ENCODE measurements at regions of chr1 and their contacts with region 1.

Region 1: GRCh38 chr1:32773018-32773763 is 44.0 kb downstream of the YARS1 start:
- DNase-seq: peak; percentile 76 to 82
- ATAC-seq: peak; percentile 59 to 83
- H3K4me3 ChIP-seq: no peak overlapping the region
- H3K27ac ChIP-seq: peak overlapping the region; percentile 28 to 99; a peak in 5 of 6 replicates
- H3K4me1 ChIP-seq: peaks cover 80% of the 10 kb centered on the region
- CTCF ChIP-seq: peak; percentile 88
- EP300 ChIP-seq: no peak
- POLR2A ChIP-seq: no peak
- RAD21 ChIP-seq: peak; percentile 87 to 88

Region 2: DNA sequence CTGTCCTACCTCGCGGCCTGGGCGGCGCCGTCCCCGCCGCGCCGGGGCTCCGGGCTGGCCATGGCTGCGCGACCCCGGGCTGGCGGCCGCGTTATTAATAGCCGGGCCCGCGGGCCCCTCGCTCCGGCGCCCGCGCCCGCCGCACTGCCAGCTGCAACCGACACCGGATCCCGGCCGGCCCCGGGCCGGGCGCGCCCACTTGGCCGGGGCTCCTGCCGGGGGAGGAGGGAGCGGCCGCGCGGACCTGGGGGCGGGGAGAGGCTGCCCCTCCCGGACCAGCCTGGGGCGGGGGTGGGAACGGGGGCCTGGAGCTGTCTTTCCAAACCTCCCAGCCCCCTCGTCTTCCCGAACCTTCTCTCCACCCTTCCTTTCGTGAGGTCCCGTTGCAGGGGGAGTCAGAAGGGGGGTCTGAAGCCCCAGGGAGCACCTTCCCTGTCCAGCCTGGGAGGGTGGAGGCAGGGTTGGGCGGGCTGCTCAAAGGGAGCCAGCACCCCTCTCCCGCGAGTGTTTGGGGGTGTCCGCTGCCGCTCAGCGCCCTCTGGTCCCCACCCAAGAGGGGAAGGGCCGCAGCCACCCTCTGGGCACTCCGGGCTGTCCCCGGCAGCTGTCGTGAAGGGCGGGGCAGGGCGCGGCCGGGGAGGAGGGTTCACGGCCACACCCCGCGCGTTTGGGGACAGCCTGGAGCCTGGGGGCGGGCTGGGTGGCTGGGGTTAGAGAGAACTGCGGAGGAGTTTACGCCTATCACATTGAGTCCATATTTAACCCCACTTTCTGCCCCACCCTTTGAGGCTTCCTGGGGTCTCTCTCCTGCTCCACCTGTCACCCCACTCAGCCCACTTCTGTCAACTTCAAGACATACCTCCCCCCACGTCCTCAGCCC is 70.4 kb before region 1 on chr1 and contains the start of gene SYNC:
- CTCF ChIA-PET with region 1: interaction called, 383 read pairs
- POLR2A ChIA-PET with region 1: interaction called, 3 read pairs
- DNase-seq: peak; percentile 56 to 69
- ATAC-seq: peak; percentile 62 to 74
- H3K4me3 ChIP-seq: peak within 1 kb of the TSS; percentile 64
- H3K27ac ChIP-seq: peak within 1 kb of the TSS; percentile 92 to 100
- H3K4me1 ChIP-seq: peaks cover 43% of the 10 kb centered on the region
- CTCF ChIP-seq: no peak
- EP300 ChIP-seq: no peak
- POLR2A ChIP-seq: peak; percentile 7; the same call in 1 of the 2 replicates
- RAD21 ChIP-seq: no peak
- polyA plus RNA-seq, gene SYNC: 5.5 and 7.7 TPM in 2 replicates

Region 3: DNA sequence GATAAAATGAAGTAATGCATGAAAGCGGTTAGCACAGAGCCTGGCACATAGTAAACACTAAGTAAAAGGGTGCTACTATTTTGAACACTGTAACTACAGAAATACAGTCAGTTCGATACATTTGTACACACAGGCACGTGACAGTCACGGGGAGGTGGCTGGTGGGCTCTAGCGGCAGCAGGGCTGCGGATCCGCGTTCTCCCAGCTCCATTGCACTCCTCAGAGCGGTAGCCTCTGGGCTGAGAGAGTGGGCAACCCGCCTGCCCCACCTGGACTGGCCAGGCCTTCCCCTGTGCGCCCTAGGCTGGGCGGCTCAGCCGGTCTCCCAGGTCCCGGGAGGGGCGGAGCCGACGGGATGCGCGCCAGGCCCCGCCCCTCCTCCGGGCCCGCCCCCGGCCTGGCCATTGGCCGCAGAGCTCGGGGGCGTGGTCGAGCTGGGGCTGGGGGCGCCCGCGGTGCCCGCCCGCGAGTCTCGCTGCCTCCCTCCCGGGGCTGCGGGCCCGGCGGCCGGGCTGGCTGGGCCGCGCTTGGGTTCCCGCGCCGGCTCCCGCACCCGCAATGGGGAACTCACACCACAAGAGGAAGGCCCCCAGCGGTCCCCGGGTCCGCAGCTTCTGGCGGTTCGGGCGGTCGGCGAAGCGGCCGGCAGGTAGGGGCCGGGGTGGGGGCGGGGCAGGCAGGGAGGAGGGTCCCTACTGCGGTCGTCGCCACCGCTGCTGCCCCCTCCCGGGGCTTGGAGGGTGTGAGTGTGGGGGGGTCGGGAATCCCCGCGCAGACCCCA is 19.5 kb before region 1 on chr1:
- CTCF ChIA-PET with region 1: interaction called, 22 read pairs
- POLR2A ChIA-PET with region 1: no interaction called
- DNase-seq: no peak
- ATAC-seq: peak in 1 of 2 experiments; percentile 49; a peak in 3 of 6 replicates
- H3K4me3 ChIP-seq: no peak overlapping the region
- H3K27ac ChIP-seq: peak overlapping the region in 1 of 2 experiments; percentile 36; a peak in 1 of 6 replicates
- H3K4me1 ChIP-seq: peaks cover 44% of the 10 kb centered on the region
- CTCF ChIP-seq: no peak
- EP300 ChIP-seq: no peak
- POLR2A ChIP-seq: no peak
- RAD21 ChIP-seq: no peak

Region 4: DNA sequence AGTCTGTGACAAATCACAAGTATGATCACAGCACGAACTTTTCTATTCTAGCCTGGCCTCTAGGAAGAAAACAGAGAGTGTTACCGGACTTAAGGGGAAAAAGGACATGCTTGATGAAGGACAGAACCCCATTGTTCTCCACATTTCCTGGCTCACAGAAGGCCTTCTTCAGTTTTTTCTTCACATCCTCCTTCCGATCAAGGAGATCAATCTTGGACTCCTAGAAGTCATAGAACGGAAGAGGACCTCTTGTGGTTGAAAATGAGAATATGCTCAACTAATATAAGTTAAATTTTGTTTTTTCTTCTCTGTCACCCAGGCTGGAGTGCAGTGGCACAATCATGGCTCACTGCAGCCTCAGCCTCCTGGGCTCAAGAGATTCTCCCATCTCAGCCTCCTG is 13.7 kb after region 1 on chr1:
- CTCF ChIA-PET with region 1: interaction called, 32 read pairs
- POLR2A ChIA-PET with region 1: interaction called, 3 read pairs
- DNase-seq: peak in 1 of 2 experiments; percentile 30
- ATAC-seq: peak in 1 of 2 experiments; percentile 69; a peak in 4 of 6 replicates
- H3K4me3 ChIP-seq: no peak overlapping the region
- H3K27ac ChIP-seq: no peak overlapping the region
- H3K4me1 ChIP-seq: peaks cover 18% of the 10 kb centered on the region
- CTCF ChIP-seq: peak; percentile 24; the same call in 1 of the 3 replicates
- EP300 ChIP-seq: no peak
- POLR2A ChIP-seq: no peak
- RAD21 ChIP-seq: peak in 1 of 2 experiments; percentile 27; a peak in 2 of 5 replicates

Measured in A549 (cell line).